CD8-positive, alpha-beta T cell (primary cell): ENCODE measurements at regions of chr9 and their contacts with region 1.

Region 1: GRCh38 chr9:131418143-131419028 is 24.5 kb downstream of the PRRC2B start:
- DNase-seq: no peak
- ATAC-seq: no peak
- H3K4me3 ChIP-seq: no peak overlapping the region
- H3K4me3 Mint-ChIP-seq: peak overlapping the region; percentile 76
- H3K27ac ChIP-seq: peak overlapping the region in 1 of 2 experiments; percentile 7
- H3K27ac Mint-ChIP-seq: peak overlapping the region; percentile 89
- H3K4me1 ChIP-seq: peaks cover 85% of the 10 kb centered on the region
- H3K4me1 Mint-ChIP-seq: peaks cover 95% of the 10 kb centered on the region
- H3K27me3 ChIP-seq: no peaks in the 10 kb centered on the region
- H3K27me3 Mint-ChIP-seq: no peaks in the 10 kb centered on the region
- CTCF ChIP-seq: no peak

Region 2: DNA sequence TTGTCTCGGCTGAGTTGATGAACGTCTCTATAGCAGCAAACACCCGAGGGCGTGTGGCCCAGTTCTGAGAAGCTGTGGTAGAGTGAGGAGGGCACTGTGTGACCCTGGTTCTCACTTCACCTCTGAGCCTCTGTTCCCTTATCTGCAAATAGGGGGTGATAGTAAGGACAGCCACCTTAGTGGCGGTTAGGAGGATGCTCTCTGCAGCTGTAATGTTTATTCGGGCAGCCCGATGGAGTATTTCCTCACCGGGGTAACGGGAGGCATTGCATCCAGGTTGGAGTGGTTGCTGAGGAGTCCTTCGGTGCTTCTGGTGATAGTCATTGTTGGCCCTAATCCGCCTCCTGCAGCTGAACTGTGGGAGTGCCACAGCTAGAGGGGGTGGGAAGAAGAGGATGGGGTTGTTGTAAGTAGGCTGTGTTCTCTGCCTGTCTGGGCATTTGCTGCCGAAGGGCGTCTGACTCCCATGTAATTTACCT is 10.6 kb before region 1 on chr9:
- CTCF ChIA-PET with region 1: interaction called, 10 read pairs
- POLR2A ChIA-PET with region 1: interaction called, 8 read pairs
- intact Hi-C with region 1: no loop called
- DNase-seq: peak in 7 of 9 experiments; percentile 28 to 86 (median 66)
- ATAC-seq: peak; percentile 68
- H3K4me3 ChIP-seq: peak overlapping the region; percentile 42 to 47
- H3K4me3 Mint-ChIP-seq: peak overlapping the region; percentile 82
- H3K27ac ChIP-seq: peak overlapping the region; percentile 53 to 78
- H3K27ac Mint-ChIP-seq: peak overlapping the region; percentile 88
- H3K4me1 ChIP-seq: peaks cover 88% of the 10 kb centered on the region
- H3K4me1 Mint-ChIP-seq: peaks cover 90% of the 10 kb centered on the region
- H3K27me3 ChIP-seq: no peaks in the 10 kb centered on the region
- H3K27me3 Mint-ChIP-seq: no peaks in the 10 kb centered on the region
- CTCF ChIP-seq: peak; percentile 63

Region 3: GRCh38 chr9:131478421-131478868 is 60.1 kb after region 1 on chr9:
- CTCF ChIA-PET with region 1: no interaction called
- POLR2A ChIA-PET with region 1: no interaction called
- intact Hi-C with region 1: loop called in 1 of 2 experiments (anchors 10 kb)
- DNase-seq: peak; percentile 39 to 76 (median 65)
- ATAC-seq: peak; percentile 70
- H3K4me3 ChIP-seq: no peak overlapping the region
- H3K4me3 Mint-ChIP-seq: no peak overlapping the region
- H3K27ac ChIP-seq: no peak overlapping the region
- H3K27ac Mint-ChIP-seq: no peak overlapping the region
- H3K4me1 ChIP-seq: peaks cover 5% of the 10 kb centered on the region
- H3K4me1 Mint-ChIP-seq: peaks cover 2% of the 10 kb centered on the region
- H3K27me3 ChIP-seq: no peaks in the 10 kb centered on the region
- H3K27me3 Mint-ChIP-seq: no peaks in the 10 kb centered on the region
- CTCF ChIP-seq: peak; percentile 60

Region 4: DNA sequence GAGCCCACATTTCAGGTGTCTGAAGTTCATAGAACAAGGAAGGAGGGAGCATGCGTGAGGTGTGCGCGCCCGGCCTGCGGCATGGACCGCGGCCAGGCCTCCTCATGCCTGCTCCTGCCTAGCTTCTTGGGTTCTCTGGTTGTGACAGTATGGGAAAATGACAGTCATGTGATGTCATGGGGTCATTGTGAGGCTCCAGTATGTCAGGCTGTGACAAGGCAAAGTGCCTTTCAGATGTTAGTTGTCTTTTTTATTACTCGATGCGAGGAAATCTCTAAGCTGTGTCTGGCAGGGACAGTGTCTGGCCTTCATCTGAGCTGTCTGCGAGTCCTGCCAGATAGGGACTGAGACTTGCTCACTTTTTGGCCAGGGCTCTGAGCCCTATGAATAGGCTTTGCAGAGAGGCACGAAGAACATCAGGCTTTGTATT is 99.4 kb after region 1 on chr9:
- CTCF ChIA-PET with region 1: no interaction called
- POLR2A ChIA-PET with region 1: no interaction called
- intact Hi-C with region 1: no loop called
- DNase-seq: no peak
- ATAC-seq: no peak
- H3K4me3 ChIP-seq: no peak overlapping the region
- H3K4me3 Mint-ChIP-seq: no peak overlapping the region
- H3K27ac ChIP-seq: no peak overlapping the region
- H3K27ac Mint-ChIP-seq: no peak overlapping the region
- H3K4me1 ChIP-seq: no peaks in the 10 kb centered on the region
- H3K4me1 Mint-ChIP-seq: no peaks in the 10 kb centered on the region
- H3K27me3 ChIP-seq: no peaks in the 10 kb centered on the region
- H3K27me3 Mint-ChIP-seq: no peaks in the 10 kb centered on the region
- CTCF ChIP-seq: no peak

Region 5: GRCh38 chr9:133060417-133060841 is 1642.0 kb after region 1 on chr9:
- CTCF ChIA-PET with region 1: no interaction called
- POLR2A ChIA-PET with region 1: no interaction called
- intact Hi-C with region 1: no loop called
- DNase-seq: peak in 1 of 9 experiments; percentile 35
- ATAC-seq: peak; percentile 45
- H3K4me3 ChIP-seq: no peak overlapping the region
- H3K4me3 Mint-ChIP-seq: peak overlapping the region; percentile 42
- H3K27ac ChIP-seq: no peak overlapping the region
- H3K27ac Mint-ChIP-seq: no peak overlapping the region
- H3K4me1 ChIP-seq: peaks cover 42% of the 10 kb centered on the region
- H3K4me1 Mint-ChIP-seq: peaks cover 38% of the 10 kb centered on the region
- H3K27me3 ChIP-seq: no peaks in the 10 kb centered on the region
- H3K27me3 Mint-ChIP-seq: no peaks in the 10 kb centered on the region
- CTCF ChIP-seq: peak; percentile 31